ENCODE measurements at regions of chr1 and their contacts with region 1.

Region 1: DNA sequence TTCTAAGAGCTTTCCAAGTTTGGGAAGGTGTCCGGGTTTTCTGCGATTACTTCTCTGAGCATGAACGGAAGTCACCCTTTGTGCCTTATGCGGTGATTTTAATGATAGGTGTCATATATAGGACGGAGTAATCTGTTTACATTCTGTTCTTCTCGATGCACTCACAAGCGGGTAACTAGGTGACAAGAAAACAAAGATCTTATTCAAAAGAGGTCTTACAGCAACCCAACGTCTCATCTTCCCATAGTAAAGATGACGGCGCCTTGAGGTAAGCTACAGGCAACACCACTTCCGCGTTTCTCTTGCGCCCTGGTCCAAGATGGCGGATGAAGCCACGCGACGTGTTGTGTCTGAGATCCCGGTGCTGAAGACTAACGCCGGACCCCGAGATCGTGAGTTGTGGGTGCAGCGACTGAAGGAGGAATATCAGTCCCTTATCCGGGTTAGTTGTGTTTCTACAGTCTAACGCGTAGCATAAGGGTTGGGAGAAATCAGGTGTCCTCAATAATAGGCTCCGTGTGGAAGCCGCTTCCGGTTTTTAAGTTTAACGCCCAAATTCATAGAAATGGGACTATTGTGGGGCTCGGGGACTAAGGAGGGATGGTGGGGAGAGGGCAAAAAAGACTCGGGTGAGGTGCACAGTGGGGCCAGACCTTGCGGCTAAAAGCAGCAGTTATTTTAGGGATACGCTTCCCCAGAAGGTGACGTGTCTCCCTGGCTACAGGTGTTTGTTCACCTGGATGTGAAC is at the start of gene UFC1:
- DNase-seq: peak; percentile 67 to 96 (median 76)
- ATAC-seq: peak; percentile 91
- H3K4me3 ChIP-seq: peak within 1 kb of the TSS; percentile 97
- H3K4me3 Mint-ChIP-seq: peak within 1 kb of the TSS; percentile 98
- H3K27ac ChIP-seq: peak within 1 kb of the TSS; percentile 96 to 99
- H3K27ac Mint-ChIP-seq: peak within 1 kb of the TSS; percentile 99
- H3K4me1 ChIP-seq: peaks cover 19% of the 10 kb centered on the region
- H3K4me1 Mint-ChIP-seq: peaks cover 42% of the 10 kb centered on the region
- H3K27me3 ChIP-seq: no peaks in the 10 kb centered on the region
- H3K27me3 Mint-ChIP-seq: no peaks in the 10 kb centered on the region
- CTCF ChIP-seq: no peak
- total RNA-seq, gene UFC1: 96.6 to 97.8 TPM

Region 2: DNA sequence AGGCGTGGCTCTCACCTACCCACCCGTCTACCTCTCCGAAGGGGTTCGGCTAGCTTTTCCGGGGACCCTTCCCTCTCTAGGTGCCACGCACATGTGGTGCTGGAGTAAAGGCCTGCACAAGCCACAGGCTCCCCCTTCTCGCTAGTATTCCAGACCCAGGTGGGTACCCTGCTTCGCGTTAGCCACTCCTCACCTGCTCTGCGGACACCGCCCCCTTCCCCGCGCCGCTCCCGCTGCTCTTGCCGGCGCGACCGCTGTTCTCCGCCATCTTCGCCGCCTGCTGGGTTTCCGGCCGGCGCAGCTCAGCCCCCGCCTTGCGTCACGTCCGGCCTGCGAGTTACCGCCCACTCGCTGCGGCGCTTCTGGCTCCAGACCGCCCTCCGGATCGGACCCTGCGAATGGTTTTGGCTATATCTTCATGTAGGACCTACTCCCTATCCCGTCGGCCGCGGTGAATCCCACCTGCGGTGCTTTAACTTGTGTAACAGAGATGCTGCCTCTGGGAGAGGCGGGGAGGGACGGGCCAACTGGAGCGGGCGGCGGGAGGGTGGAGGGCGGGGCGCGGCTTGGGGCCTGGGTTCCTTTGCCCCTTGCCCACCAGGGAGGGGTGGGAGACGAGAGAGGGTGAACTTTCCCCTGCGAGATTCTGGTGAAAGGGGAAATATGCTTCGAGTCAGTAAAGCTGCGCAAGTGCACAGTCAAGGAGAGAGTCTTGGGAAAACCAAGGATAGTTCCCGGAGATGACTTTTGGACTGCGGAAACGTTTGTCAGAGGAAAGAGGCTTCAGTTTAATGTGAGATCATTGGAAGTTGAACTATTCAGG is 35.9 kb before region 1 on chr1 and contains the starts of genes NIT1 and PFDN2:
- CTCF ChIA-PET with region 1: no interaction called
- POLR2A ChIA-PET with region 1: interaction called, 10 read pairs
- intact Hi-C with region 1: loop called (anchors 5 kb)
- DNase-seq: peak; percentile 65 to 93 (median 78)
- ATAC-seq: peak; percentile 71
- H3K4me3 ChIP-seq: peak within 1 kb of the TSS; percentile 91
- H3K4me3 Mint-ChIP-seq: peak within 1 kb of the TSS; percentile 97
- H3K27ac ChIP-seq: peak within 1 kb of the TSS; percentile 81 to 91
- H3K27ac Mint-ChIP-seq: peak within 1 kb of the TSS; percentile 91
- H3K4me1 ChIP-seq: peaks cover 53% of the 10 kb centered on the region
- H3K4me1 Mint-ChIP-seq: peaks cover 67% of the 10 kb centered on the region
- H3K27me3 ChIP-seq: no peaks in the 10 kb centered on the region
- H3K27me3 Mint-ChIP-seq: no peaks in the 10 kb centered on the region
- CTCF ChIP-seq: no peak
- total RNA-seq, gene NIT1: 15.9 to 18.0 TPM
- total RNA-seq, gene PFDN2: 46.2 to 57.7 TPM

Region 3: DNA sequence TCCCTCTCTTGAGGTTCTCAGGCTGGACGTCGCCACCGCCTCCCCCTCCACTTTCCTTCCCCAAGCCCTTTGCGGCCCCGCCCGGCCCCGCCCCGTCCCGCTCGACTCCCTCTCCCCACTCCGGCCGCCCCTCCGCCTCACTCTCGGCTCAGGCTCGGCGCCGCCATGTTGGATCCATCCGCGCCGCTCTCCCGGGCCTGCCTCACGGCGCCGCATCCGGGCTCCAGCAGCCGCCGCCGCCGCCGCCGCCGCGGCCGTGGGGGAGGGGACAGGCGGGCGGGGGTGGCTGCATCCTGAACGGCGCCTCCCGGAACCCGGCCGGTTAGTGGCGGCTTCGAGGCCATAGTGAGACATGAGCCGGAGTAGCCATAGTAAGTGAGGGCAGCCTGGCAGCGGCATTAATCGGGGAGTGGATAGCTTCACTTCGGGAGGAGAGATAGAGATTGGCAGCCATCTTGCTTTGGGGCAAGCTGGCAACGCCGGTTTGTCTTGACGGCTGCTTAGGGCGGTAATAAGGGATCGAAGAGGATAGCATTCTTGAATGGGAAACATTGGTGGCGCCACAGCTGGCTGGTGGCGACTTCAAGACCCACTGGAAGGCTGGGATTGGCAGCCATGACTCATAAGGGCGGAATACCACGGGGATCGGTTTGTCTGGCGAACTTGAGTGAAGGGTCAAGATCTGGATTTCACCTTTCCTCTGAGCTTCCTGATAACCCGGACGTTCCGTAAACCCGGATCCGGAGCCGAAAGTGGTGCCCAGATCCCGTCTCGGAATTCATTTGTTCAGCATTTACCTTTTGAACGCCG is 21.2 kb before region 1 on chr1 and contains the start of gene DEDD:
- CTCF ChIA-PET with region 1: interaction called, 3 read pairs
- POLR2A ChIA-PET with region 1: interaction called, 37 read pairs
- intact Hi-C with region 1: loop called (anchors 1 kb)
- DNase-seq: peak; percentile 80 to 97 (median 86)
- ATAC-seq: peak; percentile 95
- H3K4me3 ChIP-seq: peak within 1 kb of the TSS; percentile 98
- H3K4me3 Mint-ChIP-seq: no peak within 1 kb of the TSS
- H3K27ac ChIP-seq: peak within 1 kb of the TSS; percentile 79 to 94
- H3K27ac Mint-ChIP-seq: no peak within 1 kb of the TSS
- H3K4me1 ChIP-seq: peaks cover 46% of the 10 kb centered on the region
- H3K4me1 Mint-ChIP-seq: peaks cover 41% of the 10 kb centered on the region
- H3K27me3 ChIP-seq: no peaks in the 10 kb centered on the region
- H3K27me3 Mint-ChIP-seq: no peaks in the 10 kb centered on the region
- CTCF ChIP-seq: no peak
- total RNA-seq, gene DEDD: 35.5 to 36.6 TPM

Region 4: DNA sequence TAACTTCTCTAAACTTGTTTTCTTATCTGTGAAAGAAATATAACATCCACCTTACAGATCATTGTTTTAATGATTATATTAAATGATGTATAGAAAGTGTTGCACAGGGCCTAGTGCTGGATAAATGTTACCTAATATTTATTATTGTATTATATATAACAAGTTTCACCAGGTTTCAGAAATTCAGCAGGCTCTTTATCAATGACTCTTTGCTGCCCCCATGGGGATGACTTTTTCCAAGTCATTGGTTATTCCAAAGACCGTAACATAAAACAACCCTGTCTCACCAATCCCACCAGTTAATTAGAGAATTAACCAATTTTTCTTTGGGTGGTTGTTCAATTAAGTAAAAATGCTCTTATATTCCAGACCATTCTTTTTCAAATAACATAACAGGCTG is 14.1 kb before region 1 on chr1:
- CTCF ChIA-PET with region 1: no interaction called
- POLR2A ChIA-PET with region 1: interaction called, 11 read pairs
- intact Hi-C with region 1: no loop called
- DNase-seq: peak in 8 of 14 experiments; percentile 26 to 73 (median 50)
- ATAC-seq: peak; percentile 72
- H3K4me3 ChIP-seq: no peak overlapping the region
- H3K4me3 Mint-ChIP-seq: no peak overlapping the region
- H3K27ac ChIP-seq: no peak overlapping the region
- H3K27ac Mint-ChIP-seq: no peak overlapping the region
- H3K4me1 ChIP-seq: peaks cover 2% of the 10 kb centered on the region
- H3K4me1 Mint-ChIP-seq: peaks cover 6% of the 10 kb centered on the region
- H3K27me3 ChIP-seq: no peaks in the 10 kb centered on the region
- H3K27me3 Mint-ChIP-seq: no peaks in the 10 kb centered on the region
- CTCF ChIP-seq: peak; percentile 67

Region 5: DNA sequence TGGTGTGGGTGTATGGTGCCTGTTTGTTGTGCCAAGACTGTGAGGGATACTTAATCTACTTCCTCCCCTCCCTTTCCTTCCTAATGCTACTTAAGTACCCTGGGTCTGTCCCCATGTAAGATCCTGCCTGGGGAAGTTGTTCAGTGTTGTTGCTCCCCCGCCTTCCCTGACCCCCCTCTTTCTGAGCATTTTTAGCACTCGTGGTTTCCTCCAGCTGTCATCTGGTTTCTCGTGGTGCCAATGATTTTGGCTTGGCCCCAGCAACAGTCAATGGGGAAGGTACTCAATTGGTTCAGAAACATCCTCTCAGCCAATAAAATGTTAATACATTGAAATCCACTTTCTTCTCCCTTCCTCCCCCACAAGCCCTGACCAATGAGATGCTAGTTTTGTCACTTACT is 31.4 kb after region 1 on chr1:
- CTCF ChIA-PET with region 1: no interaction called
- POLR2A ChIA-PET with region 1: interaction called, 22 read pairs
- intact Hi-C with region 1: no loop called
- DNase-seq: peak; percentile 59 to 96 (median 74)
- ATAC-seq: peak; percentile 78
- H3K4me3 ChIP-seq: peak overlapping the region; percentile 41
- H3K4me3 Mint-ChIP-seq: peak overlapping the region; percentile 80
- H3K27ac ChIP-seq: peak overlapping the region; percentile 61 to 77
- H3K27ac Mint-ChIP-seq: peak overlapping the region; percentile 97
- H3K4me1 ChIP-seq: peaks cover 90% of the 10 kb centered on the region
- H3K4me1 Mint-ChIP-seq: peaks cover 74% of the 10 kb centered on the region
- H3K27me3 ChIP-seq: no peaks in the 10 kb centered on the region
- H3K27me3 Mint-ChIP-seq: no peaks in the 10 kb centered on the region
- CTCF ChIP-seq: no peak

Region 6: GRCh38 chr1:161274874-161275273 is 121.0 kb after region 1 on chr1:
- CTCF ChIA-PET with region 1: no interaction called
- POLR2A ChIA-PET with region 1: no interaction called
- intact Hi-C with region 1: no loop called
- DNase-seq: no peak
- ATAC-seq: no peak
- H3K4me3 ChIP-seq: no peak overlapping the region
- H3K4me3 Mint-ChIP-seq: no peak overlapping the region
- H3K27ac ChIP-seq: no peak overlapping the region
- H3K27ac Mint-ChIP-seq: no peak overlapping the region
- H3K4me1 ChIP-seq: no peaks in the 10 kb centered on the region
- H3K4me1 Mint-ChIP-seq: no peaks in the 10 kb centered on the region
- H3K27me3 ChIP-seq: no peaks in the 10 kb centered on the region
- H3K27me3 Mint-ChIP-seq: peaks cover 17% of the 10 kb centered on the region
- CTCF ChIP-seq: no peak